ENCODE measurements at regions of chr16 and their contacts with region 1.

Region 1: GRCh38 chr16:24737391-24737871 is 8.0 kb downstream of the TNRC6A start:
- DNase-seq: no peak
- ATAC-seq: no peak
- H3K4me3 Mint-ChIP-seq: no peak overlapping the region
- H3K27ac Mint-ChIP-seq: no peak overlapping the region
- H3K4me1 Mint-ChIP-seq: peaks cover 90% of the 10 kb centered on the region
- H3K27me3 Mint-ChIP-seq: no peaks in the 10 kb centered on the region

Region 2: DNA sequence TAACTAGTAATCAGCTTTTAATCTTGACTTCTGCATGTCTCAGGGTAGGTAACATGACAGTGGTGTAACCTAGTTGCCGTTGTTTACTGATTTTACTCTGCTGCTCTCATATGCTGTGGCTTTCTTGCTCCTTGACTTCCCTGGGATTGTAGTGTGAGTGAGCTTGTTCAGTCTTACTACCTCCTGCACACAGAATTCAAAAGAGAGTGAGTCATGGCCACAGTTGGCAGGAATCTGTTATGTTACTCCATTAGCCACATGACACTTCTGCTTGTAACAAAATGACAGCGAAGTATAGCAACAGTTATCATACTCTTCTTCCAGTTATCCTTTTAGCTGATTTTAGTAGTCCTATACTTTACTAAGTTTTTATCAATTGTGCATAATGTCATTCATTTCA is 10.8 kb after region 1 on chr16:
- CTCF ChIA-PET with region 1: interaction called, 5 read pairs
- POLR2A ChIA-PET with region 1: interaction called, 3 read pairs
- intact Hi-C with region 1: loop called (anchors 1 kb)
- DNase-seq: peak; percentile 40
- ATAC-seq: peak; percentile 91
- H3K4me3 Mint-ChIP-seq: no peak overlapping the region
- H3K27ac Mint-ChIP-seq: peak overlapping the region; percentile 66
- H3K4me1 Mint-ChIP-seq: peaks cover 86% of the 10 kb centered on the region
- H3K27me3 Mint-ChIP-seq: no peaks in the 10 kb centered on the region

Region 3: DNA sequence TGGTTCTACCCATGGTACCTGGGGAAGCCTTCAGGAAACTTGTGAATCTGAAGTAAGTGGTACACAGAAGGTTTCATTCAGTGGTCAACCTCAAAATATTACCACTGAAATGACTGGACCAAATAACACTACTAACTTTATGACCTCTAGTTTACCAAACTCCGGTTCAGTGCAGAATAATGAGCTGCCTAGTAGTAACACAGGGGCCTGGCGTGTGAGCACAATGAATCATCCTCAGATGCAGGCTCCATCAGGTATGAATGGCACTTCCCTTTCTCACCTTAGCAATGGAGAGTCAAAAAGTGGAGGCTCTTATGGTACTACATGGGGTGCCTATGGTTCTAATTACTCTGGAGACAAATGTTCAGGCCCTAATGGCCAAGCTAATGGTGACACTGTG is 52.5 kb after region 1 on chr16:
- CTCF ChIA-PET with region 1: no interaction called
- POLR2A ChIA-PET with region 1: no interaction called
- intact Hi-C with region 1: no loop called
- DNase-seq: no peak
- ATAC-seq: no peak
- H3K4me3 Mint-ChIP-seq: no peak overlapping the region
- H3K27ac Mint-ChIP-seq: no peak overlapping the region
- H3K4me1 Mint-ChIP-seq: no peaks in the 10 kb centered on the region
- H3K27me3 Mint-ChIP-seq: no peaks in the 10 kb centered on the region